Activated B cell treated with CpG ODN at 0.5 μM for 24 hours (primary cell): ENCODE measurements at regions of chr2 and their contacts with region 1.

Region 1: DNA sequence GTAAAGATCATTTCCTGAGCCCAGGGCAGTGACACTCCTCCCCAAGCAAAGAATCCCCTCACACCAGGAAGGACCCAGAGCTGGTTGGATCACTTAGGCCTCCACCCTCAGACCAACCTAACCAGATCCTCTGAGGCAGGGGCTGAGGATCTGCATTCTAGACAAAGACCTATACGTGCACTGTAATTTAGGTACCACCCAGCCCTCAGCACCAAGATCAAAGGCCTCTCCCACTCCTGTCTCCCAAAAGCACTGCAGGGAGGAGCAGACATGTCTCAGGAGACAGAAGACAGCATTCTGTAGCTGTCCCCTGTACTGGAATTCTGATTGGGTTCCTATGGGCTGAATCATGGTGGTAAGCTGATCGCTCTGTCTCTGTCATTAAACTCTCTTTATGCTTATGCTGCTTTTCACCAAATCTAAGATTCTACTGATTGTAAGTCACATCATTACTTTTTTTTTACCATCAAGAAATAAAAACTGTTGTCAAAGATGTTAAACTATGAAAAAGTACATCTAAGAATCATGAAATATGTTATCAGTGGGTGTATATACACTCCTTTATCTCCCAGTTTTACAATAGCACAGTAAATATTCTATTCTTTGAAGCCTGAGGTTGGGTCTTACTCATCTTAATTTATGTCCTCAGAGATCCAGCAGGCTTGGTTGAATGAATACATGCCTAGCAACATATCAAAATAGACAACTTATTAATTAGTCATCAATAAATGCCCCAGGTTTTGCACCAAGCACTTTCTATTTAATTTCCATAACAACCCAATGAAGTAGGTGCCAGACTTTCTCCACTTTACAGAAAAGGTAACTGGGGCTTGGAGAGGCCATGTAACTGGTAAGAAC is 28.3 kb downstream of the MCFD2 start:
- DNase-seq: no peak
- ATAC-seq: no peak
- H3K4me3 Mint-ChIP-seq: no peak overlapping the region
- H3K27ac Mint-ChIP-seq: no peak overlapping the region
- H3K4me1 Mint-ChIP-seq: no peaks in the 10 kb centered on the region
- H3K27me3 Mint-ChIP-seq: no peaks in the 10 kb centered on the region
- CTCF ChIP-seq: no peak

Region 2: GRCh38 chr2:46010925-46011490 is 876.2 kb before region 1 on chr2:
- CTCF ChIA-PET with region 1: no interaction called
- POLR2A ChIA-PET with region 1: no interaction called
- intact Hi-C with region 1: loop called (anchors 2 kb)
- DNase-seq: no peak
- ATAC-seq: no peak
- H3K4me3 Mint-ChIP-seq: no peak overlapping the region
- H3K27ac Mint-ChIP-seq: no peak overlapping the region
- H3K4me1 Mint-ChIP-seq: no peaks in the 10 kb centered on the region
- H3K27me3 Mint-ChIP-seq: no peaks in the 10 kb centered on the region
- CTCF ChIP-seq: no peak

Region 3: GRCh38 chr2:46062637-46063412 is 824.4 kb before region 1 on chr2:
- CTCF ChIA-PET with region 1: interaction called, 4 read pairs
- POLR2A ChIA-PET with region 1: no interaction called
- intact Hi-C with region 1: loop called (anchors 1 kb)
- DNase-seq: peak; percentile 30
- ATAC-seq: peak; percentile 70
- H3K4me3 Mint-ChIP-seq: no peak overlapping the region
- H3K27ac Mint-ChIP-seq: no peak overlapping the region
- H3K4me1 Mint-ChIP-seq: no peaks in the 10 kb centered on the region
- H3K27me3 Mint-ChIP-seq: no peaks in the 10 kb centered on the region
- CTCF ChIP-seq: peak; percentile 59

Region 4: GRCh38 chr2:46632349-46632748 is 254.9 kb before region 1 on chr2:
- CTCF ChIA-PET with region 1: no interaction called
- POLR2A ChIA-PET with region 1: interaction called, 5 read pairs
- intact Hi-C with region 1: loop called (anchors 1 kb)
- DNase-seq: no peak
- ATAC-seq: no peak
- H3K4me3 Mint-ChIP-seq: no peak overlapping the region
- H3K27ac Mint-ChIP-seq: no peak overlapping the region
- H3K4me1 Mint-ChIP-seq: peaks cover 7% of the 10 kb centered on the region
- H3K27me3 Mint-ChIP-seq: no peaks in the 10 kb centered on the region
- CTCF ChIP-seq: no peak

Region 5: DNA sequence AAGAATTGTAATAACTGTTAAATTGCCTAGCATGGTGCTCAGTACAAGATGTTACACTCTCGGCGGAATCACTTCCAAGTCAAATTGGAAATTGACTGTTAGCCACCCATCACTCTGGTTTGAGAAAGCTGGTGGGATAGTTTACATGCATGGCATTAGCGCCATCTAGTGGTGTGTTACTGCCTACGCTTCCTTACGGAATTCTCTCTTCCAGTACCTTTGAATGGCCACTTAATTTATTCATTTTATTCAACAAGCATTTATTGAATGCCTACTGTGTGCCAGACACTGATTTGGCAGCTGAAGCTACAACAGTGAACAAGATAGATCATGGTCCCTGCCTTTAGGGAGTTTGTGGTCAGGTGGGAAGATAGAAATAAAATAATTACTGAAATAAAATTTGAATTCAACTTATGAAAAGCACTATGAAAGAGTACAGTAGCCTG is 236.7 kb before region 1 on chr2:
- CTCF ChIA-PET with region 1: interaction called, 6 read pairs
- POLR2A ChIA-PET with region 1: interaction called, 5 read pairs
- intact Hi-C with region 1: loop called (anchors 2 kb)
- DNase-seq: no peak
- ATAC-seq: peak; percentile 79
- H3K4me3 Mint-ChIP-seq: no peak overlapping the region
- H3K27ac Mint-ChIP-seq: no peak overlapping the region
- H3K4me1 Mint-ChIP-seq: no peaks in the 10 kb centered on the region
- H3K27me3 Mint-ChIP-seq: no peaks in the 10 kb centered on the region
- CTCF ChIP-seq: peak; percentile 83

Region 6: GRCh38 chr2:46657042-46657504 is 230.2 kb before region 1 on chr2:
- CTCF ChIA-PET with region 1: interaction called, 5 read pairs
- POLR2A ChIA-PET with region 1: no interaction called
- intact Hi-C with region 1: loop called (anchors 1 kb)
- DNase-seq: no peak
- ATAC-seq: peak; percentile 66
- H3K4me3 Mint-ChIP-seq: no peak overlapping the region
- H3K27ac Mint-ChIP-seq: no peak overlapping the region
- H3K4me1 Mint-ChIP-seq: peaks cover 4% of the 10 kb centered on the region
- H3K27me3 Mint-ChIP-seq: no peaks in the 10 kb centered on the region
- CTCF ChIP-seq: no peak

Region 7: DNA sequence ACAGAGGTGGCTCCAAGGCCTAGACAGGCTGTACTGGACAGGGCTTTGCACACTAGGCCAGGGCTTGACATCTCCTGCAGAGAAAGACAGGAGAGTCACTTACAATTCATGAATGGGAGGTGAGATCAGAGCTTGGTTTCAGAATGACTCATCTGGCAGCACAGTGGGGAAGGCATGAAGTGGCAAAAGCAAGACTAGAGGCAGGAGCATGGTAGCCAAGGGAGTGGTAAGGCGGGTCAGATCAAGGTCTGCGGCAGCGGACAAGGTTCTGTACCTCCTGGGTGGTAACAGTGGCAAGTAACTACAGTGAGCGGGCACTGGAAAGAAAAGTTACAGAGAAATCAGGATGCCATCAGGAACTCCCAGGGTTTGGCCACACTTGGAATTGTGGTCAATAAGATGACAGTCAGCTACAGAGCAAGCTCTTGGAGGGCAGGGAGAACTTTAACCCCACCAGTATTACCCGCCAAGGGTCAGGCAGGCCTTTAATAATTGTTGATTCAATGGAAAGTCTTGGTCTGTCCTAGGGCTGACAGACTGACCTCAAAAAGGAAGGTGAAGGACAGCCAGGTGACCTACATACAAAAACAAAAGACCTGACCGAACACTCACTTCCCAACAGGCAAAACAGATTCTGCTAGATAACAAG is 22.6 kb after region 1 on chr2:
- CTCF ChIA-PET with region 1: interaction called, 4 read pairs
- POLR2A ChIA-PET with region 1: no interaction called
- intact Hi-C with region 1: loop called (anchors 1 kb)
- DNase-seq: no peak
- ATAC-seq: peak; percentile 90
- H3K4me3 Mint-ChIP-seq: no peak overlapping the region
- H3K27ac Mint-ChIP-seq: peak overlapping the region; percentile 1
- H3K4me1 Mint-ChIP-seq: peaks cover 39% of the 10 kb centered on the region
- H3K27me3 Mint-ChIP-seq: no peaks in the 10 kb centered on the region
- CTCF ChIP-seq: no peak